Left colon (tissue), 2 donors: ENCODE measurements at regions of chr5 and their contacts with region 1.

Region 1: GRCh38 chr5:151174612-151175101 is 17.1 kb upstream of the ANXA6 start:
- DNase-seq: no peak
- ATAC-seq: no peak

Region 2: DNA sequence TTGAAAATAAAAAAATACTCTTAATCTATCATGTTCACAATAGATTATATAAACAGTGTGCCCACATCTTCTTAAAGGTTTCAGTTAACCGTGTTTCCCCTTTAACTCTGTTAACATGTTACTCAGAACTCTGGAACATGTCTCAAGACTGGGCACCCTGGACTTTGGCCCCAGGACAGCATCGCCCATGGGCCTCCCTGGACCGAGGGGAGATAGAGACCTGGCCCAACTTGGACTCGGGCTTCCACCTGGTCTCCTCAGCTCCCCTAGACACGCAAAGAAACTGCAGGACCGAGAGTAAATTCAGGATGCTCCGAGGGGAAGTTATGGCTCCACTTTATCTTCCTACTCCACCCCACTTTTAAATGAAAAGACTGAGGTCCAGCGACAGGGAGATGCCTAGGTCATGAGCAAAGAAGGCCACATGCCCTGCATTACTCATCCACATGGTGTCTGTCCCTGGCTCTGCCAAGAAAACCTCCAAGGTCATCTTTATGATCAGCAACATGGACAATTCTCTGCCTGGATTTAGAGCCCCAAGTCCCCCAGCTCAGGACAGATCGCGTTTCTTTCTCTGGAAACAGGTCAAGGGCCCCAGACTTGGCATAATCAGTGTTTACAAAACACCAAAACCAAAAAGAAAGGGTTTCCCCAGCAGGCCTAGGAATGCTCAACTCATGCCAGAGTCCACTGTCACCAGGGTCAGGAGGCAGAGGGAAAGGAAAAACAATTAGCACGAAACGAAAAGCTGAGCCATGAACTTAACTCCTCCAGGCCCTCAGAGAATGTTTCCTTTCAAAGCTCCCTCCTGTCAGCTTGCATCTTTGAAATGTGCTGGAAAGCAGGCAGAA is 136.9 kb before region 1 on chr5:
- intact Hi-C with region 1: no loop called
- DNase-seq: no peak
- ATAC-seq: no peak

Region 3: DNA sequence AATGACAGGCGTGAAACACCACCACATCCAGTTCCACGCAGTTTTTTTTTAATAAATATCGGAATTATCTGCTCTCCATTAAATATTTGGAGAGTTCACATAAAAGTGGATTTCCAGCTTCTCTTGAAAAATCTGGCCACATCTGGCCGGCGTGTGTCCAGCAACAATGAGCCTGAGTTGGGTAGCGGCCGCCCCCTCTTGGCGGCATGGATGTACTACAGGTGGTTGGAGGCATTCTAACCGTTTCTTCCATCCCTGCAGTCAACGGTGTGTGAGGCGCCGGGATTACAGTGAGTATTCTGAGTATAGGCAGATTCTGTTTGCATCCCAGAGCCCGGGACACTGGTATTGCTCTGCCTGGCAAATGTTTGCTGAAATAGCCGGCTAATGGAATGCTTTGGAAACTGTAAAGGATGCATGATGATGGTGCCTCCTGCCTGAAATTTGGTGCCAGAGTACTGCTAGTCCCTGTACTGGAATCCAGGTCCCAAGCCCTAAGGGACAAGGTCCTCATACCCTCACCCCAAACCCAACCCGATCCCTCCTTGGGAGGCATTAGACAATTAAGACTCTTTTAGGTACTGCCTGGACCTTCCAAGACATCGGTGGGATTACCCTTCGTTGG is 64.7 kb after region 1 on chr5:
- intact Hi-C with region 1: loop called in 1 of 2 experiments (anchors 10 kb)
- DNase-seq: peak; percentile 64 to 79
- ATAC-seq: peak; percentile 87